CD14-positive monocyte (primary cell): ENCODE measurements at regions of chr21 and their contacts with region 1.

Region 1: DNA sequence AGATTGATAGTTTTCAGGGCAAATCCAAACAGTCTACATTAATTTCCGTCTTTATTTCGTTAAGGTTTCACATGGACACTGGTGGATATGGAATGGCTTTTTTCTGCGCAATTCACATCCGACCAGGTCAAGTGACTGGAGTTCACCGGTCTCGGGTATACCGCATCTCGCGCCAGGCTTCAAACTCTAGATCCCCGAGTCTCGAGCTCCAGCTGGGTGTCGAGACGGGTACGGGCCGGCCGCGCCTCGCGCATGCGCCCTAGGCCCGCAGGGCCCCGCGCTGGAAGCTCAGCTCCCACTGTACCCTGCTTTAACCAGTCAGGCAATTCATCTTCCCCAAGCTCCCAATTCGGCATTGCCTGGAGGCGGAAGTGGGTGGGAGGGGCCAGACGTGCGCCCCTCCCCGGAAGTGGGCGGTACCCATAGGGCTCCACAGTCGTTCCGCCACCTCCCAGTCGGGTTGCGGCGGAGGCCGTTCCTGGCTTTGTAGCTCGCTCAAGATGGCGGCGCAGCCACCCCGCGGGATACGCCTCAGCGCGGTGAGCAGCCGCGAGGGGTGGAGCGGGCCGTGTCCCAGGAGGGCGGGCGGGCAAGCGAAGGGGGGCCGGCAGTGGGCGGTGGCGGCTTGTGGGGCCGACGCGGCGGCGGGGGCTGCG is at the start of gene MORC3:
- DNase-seq: peak; percentile 99 to 100 (median 99)
- H3K4me3 ChIP-seq: peak within 1 kb of the TSS; percentile 81 to 93 (median 89)
- H3K4me3 Mint-ChIP-seq: peak within 1 kb of the TSS; percentile 86 to 95
- H3K27ac ChIP-seq: peak within 1 kb of the TSS; percentile 86 to 90
- H3K27ac Mint-ChIP-seq: peak within 1 kb of the TSS; percentile 92 to 98 (median 98)
- H3K4me1 ChIP-seq: peaks cover 36 to 43% of the 10 kb centered on the region in 2 donors
- H3K4me1 Mint-ChIP-seq: peaks cover 36% of the 10 kb centered on the region
- H3K27me3 ChIP-seq: no peaks in the 10 kb centered on the region
- H3K27me3 Mint-ChIP-seq: peaks cover 0 to 6% (median 2%) of the 10 kb centered on the region in 3 donors
- CTCF ChIP-seq: no peak
- polyA plus RNA-seq, gene MORC3: 16.3 to 27.6 (median 25.5) TPM

Region 2: GRCh38 chr21:36069713-36070573 is 249.9 kb before region 1 on chr21 and contains the start of gene CBR1:
- intact Hi-C with region 1: loop called in 1 of 2 experiments (anchors 5 kb)
- DNase-seq: peak; percentile 90 to 91 (median 91)
- H3K4me3 ChIP-seq: peak within 1 kb of the TSS; percentile 50 to 87 (median 78)
- H3K4me3 Mint-ChIP-seq: peak within 1 kb of the TSS; percentile 89 to 94
- H3K27ac ChIP-seq: peak within 1 kb of the TSS; percentile 13 to 68
- H3K27ac Mint-ChIP-seq: peak within 1 kb of the TSS; percentile 46 to 90 (median 77)
- H3K4me1 ChIP-seq: peaks cover 26 to 41% of the 10 kb centered on the region in 2 donors
- H3K4me1 Mint-ChIP-seq: peaks cover 47% of the 10 kb centered on the region
- H3K27me3 ChIP-seq: no peaks in the 10 kb centered on the region
- H3K27me3 Mint-ChIP-seq: peaks cover 0 to 4% (median 3%) of the 10 kb centered on the region in 3 donors
- CTCF ChIP-seq: no peak
- polyA plus RNA-seq, gene CBR1: 36.9 to 114 (median 100) TPM

Region 3: DNA sequence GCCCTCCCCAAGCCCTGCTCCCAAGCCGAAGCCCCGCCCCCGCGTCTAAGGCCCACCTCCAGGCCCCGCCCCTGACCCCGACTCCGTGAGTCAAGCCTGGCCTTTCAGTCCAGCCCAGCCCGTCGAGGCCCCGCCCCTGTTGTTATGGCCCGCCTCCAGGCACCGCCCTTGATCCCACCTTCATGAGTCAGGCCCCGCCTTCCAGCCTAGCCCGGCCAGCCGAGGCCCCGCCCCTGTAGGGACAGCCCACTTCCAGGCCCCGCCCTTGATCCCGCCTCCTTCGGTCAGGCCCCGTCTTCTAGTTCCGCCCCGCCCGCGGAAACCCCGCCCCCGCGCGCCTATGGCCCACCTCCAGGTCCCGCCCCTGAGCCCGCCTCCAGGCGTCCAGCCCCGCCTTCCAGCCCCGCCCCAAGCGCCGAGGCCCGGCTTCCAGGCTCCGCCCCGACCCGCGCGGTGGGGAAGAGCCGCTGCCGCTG is 163.5 kb before region 1 on chr21:
- intact Hi-C with region 1: loop called (anchors 1 to 10 kb)
- DNase-seq: peak; percentile 99
- H3K4me3 ChIP-seq: peak overlapping the region; percentile 73 to 90 (median 77)
- H3K4me3 Mint-ChIP-seq: peak overlapping the region; percentile 86 to 93
- H3K27ac ChIP-seq: peak overlapping the region; percentile 57 to 80
- H3K27ac Mint-ChIP-seq: peak overlapping the region in 4 of 7 donors; percentile 77 to 94 (median 90)
- H3K4me1 ChIP-seq: peaks cover 43 to 46% of the 10 kb centered on the region in 2 donors
- H3K4me1 Mint-ChIP-seq: peaks cover 52% of the 10 kb centered on the region
- H3K27me3 ChIP-seq: no peaks in the 10 kb centered on the region
- H3K27me3 Mint-ChIP-seq: peaks cover 1 to 3% (median 2%) of the 10 kb centered on the region in 3 donors
- CTCF ChIP-seq: no peak

Region 4: GRCh38 chr21:36232641-36233040 is 87.3 kb before region 1 on chr21:
- intact Hi-C with region 1: no loop called
- DNase-seq: no peak
- H3K4me3 ChIP-seq: no peak overlapping the region
- H3K4me3 Mint-ChIP-seq: no peak overlapping the region
- H3K27ac ChIP-seq: no peak overlapping the region
- H3K27ac Mint-ChIP-seq: no peak overlapping the region
- H3K4me1 ChIP-seq: no peaks in the 10 kb centered on the region
- H3K4me1 Mint-ChIP-seq: no peaks in the 10 kb centered on the region
- H3K27me3 ChIP-seq: no peaks in the 10 kb centered on the region
- H3K27me3 Mint-ChIP-seq: peaks cover 0 to 2% (median 0%) of the 10 kb centered on the region in 3 donors
- CTCF ChIP-seq: no peak

Region 5: DNA sequence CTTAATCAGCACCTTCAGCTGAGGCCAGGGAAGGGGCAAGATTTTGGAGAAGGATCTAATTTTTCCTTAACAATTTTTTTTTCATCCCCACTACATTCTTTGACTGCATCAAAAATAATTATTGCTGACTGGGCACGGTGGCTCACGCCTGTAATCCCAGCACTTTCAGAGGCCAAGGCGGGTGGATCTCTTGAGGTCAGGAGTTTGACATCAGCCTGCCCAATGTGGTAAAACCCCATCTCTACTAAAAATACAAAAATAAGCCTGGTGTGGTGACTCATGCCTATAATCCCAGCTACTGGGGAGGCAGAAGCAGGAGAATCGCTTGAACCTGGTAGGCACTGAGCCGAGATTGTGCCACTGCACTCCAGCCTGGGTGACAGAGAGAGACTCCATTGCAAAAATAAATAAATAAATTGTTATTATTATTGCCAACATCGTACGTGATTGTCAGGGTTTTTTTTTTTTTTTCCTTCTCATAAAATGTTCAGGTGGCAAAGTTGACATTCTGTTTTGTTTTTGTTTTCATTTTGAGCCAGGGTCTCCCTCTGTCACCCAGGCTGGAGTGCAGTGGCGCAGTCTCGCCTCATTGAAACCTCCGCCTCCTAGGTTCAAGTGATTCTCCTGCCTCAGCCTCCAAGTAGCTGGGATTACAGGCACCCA is 37.2 kb before region 1 on chr21:
- intact Hi-C with region 1: no loop called
- DNase-seq: no peak
- H3K4me3 ChIP-seq: no peak overlapping the region
- H3K4me3 Mint-ChIP-seq: no peak overlapping the region
- H3K27ac ChIP-seq: no peak overlapping the region
- H3K27ac Mint-ChIP-seq: peak overlapping the region in 4 of 7 donors; percentile 5 to 72 (median 23)
- H3K4me1 ChIP-seq: no peaks in the 10 kb centered on the region
- H3K4me1 Mint-ChIP-seq: no peaks in the 10 kb centered on the region
- H3K27me3 ChIP-seq: no peaks in the 10 kb centered on the region
- H3K27me3 Mint-ChIP-seq: no peaks in the 10 kb centered on the region
- CTCF ChIP-seq: no peak